Posterior cingulate gyrus (tissue), 11 donors: ENCODE measurements at regions of chr6 and their contacts with region 1.

Region 1: GRCh38 chr6:41027799-41028628 is 11.0 kb downstream of the UNC5CL start:
- DNase-seq: peak; percentile 49 to 97 (median 83)

Region 2: GRCh38 chr6:40074306-40075055 is 953.5 kb before region 1 on chr6:
- intact Hi-C with region 1: no loop called
- DNase-seq: no peak

Region 3: GRCh38 chr6:40894962-40895799 is 132.8 kb before region 1 on chr6:
- intact Hi-C with region 1: loop called (anchors 2 kb)
- DNase-seq: peak in 4 of 10 donors; percentile 35 to 88 (median 56)